Activated CD4-positive, alpha-beta T cell treated with anti-CD3 and anti-CD28 coated beads, Interleukin-2, amount 10 ng/mL, durations not matched to agents 24 days and 14 days (primary cell): ENCODE measurements at regions of chr4 and their contacts with region 1.

Region 1: GRCh38 chr4:102760645-102761295 is at the start of gene MANBA:
- DNase-seq: peak; percentile 94
- H3K4me3 Mint-ChIP-seq: peak within 1 kb of the TSS; percentile 88
- H3K27ac Mint-ChIP-seq: peak within 1 kb of the TSS; percentile 87
- H3K4me1 Mint-ChIP-seq: peaks cover 28% of the 10 kb centered on the region
- H3K27me3 Mint-ChIP-seq: peaks cover 13% of the 10 kb centered on the region
- total RNA-seq, gene MANBA: 8.2 and 9.4 TPM in 2 replicates

Region 2: DNA sequence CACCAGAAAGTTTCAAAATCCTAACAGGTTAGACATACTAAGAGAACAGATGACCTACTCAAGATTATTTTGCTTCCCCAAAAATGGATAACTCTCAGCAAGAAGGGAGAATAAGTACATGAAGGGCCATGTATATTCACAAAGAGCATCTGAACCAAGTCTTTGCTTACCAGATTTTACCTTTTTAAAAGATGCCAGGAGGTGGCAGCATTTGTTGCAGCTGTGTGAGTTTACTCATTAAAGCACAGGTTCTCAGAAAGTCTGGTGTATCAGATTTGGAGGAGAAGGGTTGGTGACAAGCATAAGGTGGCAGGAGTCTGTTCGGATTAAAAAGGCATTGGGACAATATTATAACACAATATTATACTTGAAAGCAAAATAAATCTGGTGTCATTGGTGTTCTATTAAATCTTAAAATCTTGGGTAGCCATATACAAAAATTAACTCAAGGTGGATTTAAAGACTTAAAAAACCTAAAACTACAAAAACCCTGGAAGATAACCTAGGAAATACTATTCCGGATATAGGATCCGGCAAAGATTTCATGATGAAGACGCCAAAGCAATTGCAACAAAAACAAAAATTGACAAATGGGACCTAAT is 310.9 kb before region 1 on chr4:
- intact Hi-C with region 1: loop called (anchors 2 kb)
- DNase-seq: peak; percentile 89
- H3K4me3 Mint-ChIP-seq: no peak overlapping the region
- H3K27ac Mint-ChIP-seq: no peak overlapping the region
- H3K4me1 Mint-ChIP-seq: peaks cover 42% of the 10 kb centered on the region
- H3K27me3 Mint-ChIP-seq: no peaks in the 10 kb centered on the region

Region 3: GRCh38 chr4:102799816-102800215 is 39.0 kb after region 1 on chr4:
- intact Hi-C with region 1: loop called (anchors 5 kb)
- DNase-seq: peak; percentile 23
- H3K4me3 Mint-ChIP-seq: no peak overlapping the region
- H3K27ac Mint-ChIP-seq: no peak overlapping the region
- H3K4me1 Mint-ChIP-seq: peaks cover 7% of the 10 kb centered on the region
- H3K27me3 Mint-ChIP-seq: no peaks in the 10 kb centered on the region

Region 4: GRCh38 chr4:102819588-102820365 is 59.0 kb after region 1 on chr4:
- intact Hi-C with region 1: loop called (anchors 2 kb)
- DNase-seq: peak; percentile 78
- H3K4me3 Mint-ChIP-seq: peak overlapping the region; percentile 81
- H3K27ac Mint-ChIP-seq: peak overlapping the region; percentile 86
- H3K4me1 Mint-ChIP-seq: peaks cover 63% of the 10 kb centered on the region
- H3K27me3 Mint-ChIP-seq: no peaks in the 10 kb centered on the region

Region 5: DNA sequence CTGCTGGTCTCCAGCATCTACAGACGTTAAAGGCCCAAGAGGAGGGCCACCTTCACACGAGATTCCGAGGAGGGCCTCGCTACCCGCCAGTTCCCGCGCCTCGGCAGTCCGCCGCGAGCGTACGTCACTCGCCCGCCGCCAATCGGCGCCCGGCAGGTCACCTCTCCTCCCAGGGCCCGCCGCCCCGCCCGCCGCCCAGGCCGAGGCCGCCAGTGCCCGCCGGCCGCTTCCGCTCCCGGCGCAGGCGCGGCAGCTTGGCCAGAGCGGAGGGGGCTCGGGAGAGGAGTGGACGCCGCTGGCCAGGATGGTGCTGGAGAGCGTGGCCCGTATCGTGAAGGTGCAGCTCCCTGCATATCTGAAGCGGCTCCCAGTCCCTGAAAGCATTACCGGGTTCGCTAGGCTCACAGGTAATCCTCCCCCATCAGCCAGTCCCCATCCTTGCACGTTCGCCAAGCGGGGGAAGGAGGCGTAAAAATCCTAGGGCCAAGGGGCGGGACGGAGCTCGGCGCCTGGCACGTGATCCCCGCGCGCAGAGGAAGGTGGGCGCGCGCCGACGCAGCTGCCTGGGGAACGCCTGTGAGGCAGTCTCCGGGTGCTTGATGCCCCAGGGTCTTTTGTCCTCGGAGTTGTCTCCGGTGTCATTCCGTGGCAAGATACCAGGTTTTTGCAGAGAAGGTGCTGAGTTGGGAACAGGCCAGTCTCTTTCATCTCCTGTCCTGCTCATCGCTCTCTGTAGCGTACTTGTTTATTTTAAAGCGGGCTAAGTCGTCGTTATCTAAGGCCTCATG is 108.2 kb after region 1 on chr4 and contains the start of gene CISD2:
- intact Hi-C with region 1: loop called (anchors 2 kb)
- DNase-seq: peak; percentile 98
- H3K4me3 Mint-ChIP-seq: peak within 1 kb of the TSS; percentile 93
- H3K27ac Mint-ChIP-seq: peak within 1 kb of the TSS; percentile 99
- H3K4me1 Mint-ChIP-seq: peaks cover 56% of the 10 kb centered on the region
- H3K27me3 Mint-ChIP-seq: no peaks in the 10 kb centered on the region
- total RNA-seq, gene CISD2: 43.9 and 48.5 TPM in 2 replicates

Region 6: DNA sequence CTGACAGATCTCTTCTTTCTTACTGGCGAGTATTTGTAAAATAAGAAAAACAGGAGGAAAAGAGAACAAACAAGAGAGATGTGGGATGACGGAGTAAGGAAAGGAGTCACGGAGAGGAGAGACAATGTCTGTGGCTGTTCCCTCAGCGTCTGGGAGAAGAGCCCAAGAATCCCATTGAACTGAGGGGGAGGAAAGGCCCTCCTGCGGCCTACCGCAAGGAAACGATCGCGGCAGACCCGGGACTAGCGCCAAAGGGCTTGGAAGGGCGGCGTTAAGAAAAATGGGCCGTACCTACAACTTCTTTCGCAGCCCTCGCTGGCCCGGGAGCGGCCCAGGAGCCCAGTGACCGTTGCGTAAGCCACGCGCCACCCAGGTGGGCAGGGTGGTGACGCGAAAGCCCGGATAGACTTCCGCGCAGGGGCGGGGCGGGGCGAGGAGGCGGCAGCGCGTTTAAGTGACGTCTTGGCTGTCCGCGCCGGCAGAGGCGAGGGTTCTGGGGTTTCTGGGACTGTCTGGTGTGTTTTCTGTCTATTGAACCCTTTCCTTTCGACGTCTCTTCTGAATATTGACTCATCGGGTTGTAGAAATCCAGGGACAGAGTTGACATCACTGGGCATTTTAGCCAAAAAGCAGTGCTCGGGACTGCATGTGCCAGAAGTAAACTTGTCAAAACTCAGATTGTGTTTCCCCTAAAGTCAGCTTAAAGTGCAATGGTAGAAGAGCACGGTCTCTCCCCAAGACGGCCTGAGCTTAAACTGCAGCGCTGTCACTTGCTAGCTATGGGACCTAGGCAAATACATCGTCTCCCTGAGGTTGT is 258.7 kb after region 1 on chr4 and contains the start of gene SLC9B1:
- intact Hi-C with region 1: loop called (anchors 5 kb)
- DNase-seq: peak; percentile 98
- H3K4me3 Mint-ChIP-seq: peak within 1 kb of the TSS; percentile 93
- H3K27ac Mint-ChIP-seq: peak within 1 kb of the TSS; percentile 94
- H3K4me1 Mint-ChIP-seq: peaks cover 22% of the 10 kb centered on the region
- H3K27me3 Mint-ChIP-seq: no peaks in the 10 kb centered on the region
- total RNA-seq, gene SLC9B1: 0.23 and 0.47 TPM in 2 replicates

Region 7: GRCh38 chr4:103198111-103198765 is 437.5 kb after region 1 on chr4 and contains the start of gene CENPE:
- intact Hi-C with region 1: loop called (anchors 10 kb)
- DNase-seq: peak; percentile 97
- H3K4me3 Mint-ChIP-seq: peak within 1 kb of the TSS; percentile 84
- H3K27ac Mint-ChIP-seq: peak within 1 kb of the TSS; percentile 100
- H3K4me1 Mint-ChIP-seq: peaks cover 28% of the 10 kb centered on the region
- H3K27me3 Mint-ChIP-seq: peaks cover 13% of the 10 kb centered on the region
- total RNA-seq, gene CENPE: 24.6 and 29.8 TPM in 2 replicates